Thyroid gland (tissue), 4 donors: ENCODE measurements at regions of chr12 and their contacts with region 1.

Region 1: GRCh38 chr12:48857278-48857994 is 5.5 kb upstream of the DDX23 start:
- DNase-seq: no peak
- H3K4me3 ChIP-seq: no peak overlapping the region
- H3K27ac ChIP-seq: no peak overlapping the region
- H3K4me1 ChIP-seq: peaks cover 3 to 5% of the 10 kb centered on the region in 2 donors
- H3K27me3 ChIP-seq: no peaks in the 10 kb centered on the region
- CTCF ChIP-seq: no peak
- POLR2A ChIP-seq: no peak

Region 2: DNA sequence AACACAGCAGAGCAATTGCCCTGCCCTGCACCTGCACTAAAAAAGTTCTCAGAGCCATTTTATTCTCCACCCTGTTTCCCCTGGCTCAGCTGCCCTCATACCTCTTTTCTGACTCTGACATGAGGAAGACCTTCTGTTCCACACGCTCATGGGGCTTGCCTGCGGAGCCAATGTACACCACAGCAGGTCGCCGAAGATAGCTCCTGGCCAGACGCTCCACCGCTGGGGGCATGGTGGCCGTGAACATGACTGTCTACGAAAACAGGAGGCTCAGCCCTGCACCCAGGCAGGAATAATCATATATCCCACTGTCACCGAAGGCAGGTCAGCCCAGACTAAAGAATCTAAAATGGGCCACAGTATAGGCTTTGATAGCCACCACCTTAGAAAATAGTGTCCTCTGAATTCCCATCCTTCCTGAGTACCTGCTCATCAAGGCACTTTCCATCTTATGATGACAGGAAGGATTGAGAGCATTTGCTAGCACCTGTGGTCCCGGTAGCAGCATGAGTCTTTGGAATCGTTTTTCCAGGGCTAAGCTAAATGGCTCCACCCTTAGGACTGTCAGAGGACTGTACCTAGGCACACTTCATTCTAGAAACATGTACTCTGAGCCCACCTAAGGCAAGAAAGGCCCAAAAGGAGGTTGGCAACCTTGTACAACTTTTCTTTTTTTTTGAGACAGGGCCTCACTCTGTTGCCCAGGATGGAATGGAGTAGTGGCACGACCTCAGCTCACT is 24.9 kb before region 1 on chr12:
- intact Hi-C with region 1: no loop called
- DNase-seq: no peak
- H3K4me3 ChIP-seq: no peak overlapping the region
- H3K27ac ChIP-seq: no peak overlapping the region
- H3K4me1 ChIP-seq: no peaks in the 10 kb centered on the region
- H3K27me3 ChIP-seq: no peaks in the 10 kb centered on the region
- CTCF ChIP-seq: no peak
- POLR2A ChIP-seq: no peak

Region 3: DNA sequence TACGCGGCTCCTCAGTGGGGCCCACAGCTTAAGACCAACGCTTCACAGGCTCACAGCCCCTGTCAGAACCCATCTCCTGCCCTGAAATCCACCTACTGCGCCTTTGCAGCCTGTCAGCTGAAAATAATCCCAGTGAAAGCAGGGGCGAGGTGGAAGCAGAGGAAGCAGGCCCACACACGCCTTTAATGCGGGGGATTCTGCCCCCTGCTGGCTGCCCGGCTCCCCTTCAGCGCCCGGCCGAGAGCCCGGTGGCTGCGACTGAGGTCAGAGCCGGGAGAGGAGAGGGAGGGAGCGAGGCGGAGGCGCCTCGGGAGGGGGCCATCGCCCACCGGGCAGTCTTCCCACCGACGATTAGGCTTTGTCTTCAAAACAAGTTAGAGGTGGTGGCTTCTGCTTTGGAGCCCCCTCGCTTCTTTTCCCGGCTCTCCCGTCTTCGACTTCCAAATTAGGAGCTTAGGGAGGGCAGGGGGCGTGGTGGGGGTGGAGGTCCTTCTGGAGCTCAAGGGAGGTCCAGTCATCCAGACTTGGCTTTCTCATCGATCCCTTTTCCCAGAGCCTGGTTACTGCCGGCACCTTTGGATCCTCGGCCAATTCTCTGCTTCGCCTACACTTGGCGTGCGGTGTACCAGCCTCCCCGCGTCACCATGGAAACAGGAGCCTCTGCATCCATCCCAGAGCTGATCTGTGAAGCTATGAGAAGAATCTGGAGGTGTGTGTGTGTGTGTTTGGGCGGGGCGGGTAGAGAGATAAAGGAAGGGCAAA is 33.4 kb after region 1 on chr12:
- intact Hi-C with region 1: loop called (anchors 2 kb)
- DNase-seq: peak; percentile 78 to 81
- H3K4me3 ChIP-seq: no peak overlapping the region
- H3K27ac ChIP-seq: no peak overlapping the region
- H3K4me1 ChIP-seq: peaks cover 0 to 8% of the 10 kb centered on the region in 2 donors
- H3K27me3 ChIP-seq: no peaks in the 10 kb centered on the region
- CTCF ChIP-seq: peak; percentile 85 to 96 (median 92)
- POLR2A ChIP-seq: no peak

Region 4: DNA sequence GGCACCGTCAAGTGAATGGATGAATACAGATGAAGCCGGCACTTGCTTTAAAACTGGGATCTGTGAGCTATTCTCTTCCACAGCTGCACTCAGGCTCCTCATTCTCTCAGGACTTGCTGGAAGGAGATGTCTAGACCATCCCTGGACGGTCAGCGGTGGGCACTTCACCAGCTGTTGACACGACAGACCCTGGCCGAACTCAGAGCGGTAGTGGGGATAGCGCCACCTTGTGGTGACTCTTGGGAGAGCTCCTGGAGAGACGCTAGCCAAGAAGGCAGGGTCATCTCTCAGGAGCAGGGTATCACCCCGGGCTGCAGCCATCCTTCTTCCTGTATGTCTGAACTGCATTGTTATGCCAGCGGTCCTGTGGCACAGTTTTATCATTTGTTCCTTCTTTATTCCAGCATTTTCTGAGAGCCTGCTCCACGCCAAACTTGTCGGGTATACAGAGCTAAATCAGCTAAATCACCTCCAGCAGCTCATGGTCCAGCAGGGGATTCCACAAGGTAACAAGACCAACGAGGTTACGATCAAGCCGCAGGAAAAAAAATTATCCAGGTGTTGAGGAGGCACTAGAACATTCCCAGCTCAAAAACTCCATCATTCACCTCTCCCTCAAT is 130.7 kb after region 1 on chr12:
- intact Hi-C with region 1: loop called (anchors 5 kb)
- DNase-seq: peak; percentile 61 to 66
- H3K4me3 ChIP-seq: no peak overlapping the region
- H3K27ac ChIP-seq: no peak overlapping the region
- H3K4me1 ChIP-seq: no peaks in the 10 kb centered on the region
- H3K27me3 ChIP-seq: no peaks in the 10 kb centered on the region
- CTCF ChIP-seq: peak; percentile 56 to 84 (median 72)
- POLR2A ChIP-seq: no peak